Adrenal gland (tissue), 19 donors: ENCODE measurements at regions of chr11 and their contacts with region 1.

Region 1: DNA sequence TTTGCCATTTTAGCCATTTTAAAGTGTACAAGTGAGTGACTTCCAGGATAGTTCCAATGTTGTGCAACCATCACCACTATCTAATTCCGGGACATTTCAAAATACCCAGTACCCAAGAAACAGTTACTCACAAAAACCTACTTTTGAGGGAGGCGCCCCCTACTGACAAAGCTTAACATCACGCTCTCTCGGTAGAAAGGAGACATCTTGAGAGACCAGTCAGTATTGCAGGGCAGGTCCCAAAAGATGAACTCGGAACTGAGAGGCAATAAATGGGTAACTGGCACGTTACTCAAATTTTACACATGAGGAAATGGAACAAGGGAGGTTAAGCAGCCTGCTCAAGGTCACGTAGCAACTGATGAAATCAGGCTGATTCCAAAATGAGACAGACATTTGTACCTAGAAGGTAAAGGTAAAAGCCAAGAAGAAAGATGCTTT is 50.0 kb upstream of the POU2AF1 start:
- DNase-seq: peak; percentile 53 to 87 (median 76)
- H3K4me3 ChIP-seq: no peak overlapping the region
- H3K27ac ChIP-seq: no peak overlapping the region
- H3K4me1 ChIP-seq: no peaks in the 10 kb centered on the region
- H3K27me3 ChIP-seq: no peaks in the 10 kb centered on the region
- CTCF ChIP-seq: peak; percentile 57 to 73 (median 66)
- POLR2A ChIP-seq: no peak

Region 2: DNA sequence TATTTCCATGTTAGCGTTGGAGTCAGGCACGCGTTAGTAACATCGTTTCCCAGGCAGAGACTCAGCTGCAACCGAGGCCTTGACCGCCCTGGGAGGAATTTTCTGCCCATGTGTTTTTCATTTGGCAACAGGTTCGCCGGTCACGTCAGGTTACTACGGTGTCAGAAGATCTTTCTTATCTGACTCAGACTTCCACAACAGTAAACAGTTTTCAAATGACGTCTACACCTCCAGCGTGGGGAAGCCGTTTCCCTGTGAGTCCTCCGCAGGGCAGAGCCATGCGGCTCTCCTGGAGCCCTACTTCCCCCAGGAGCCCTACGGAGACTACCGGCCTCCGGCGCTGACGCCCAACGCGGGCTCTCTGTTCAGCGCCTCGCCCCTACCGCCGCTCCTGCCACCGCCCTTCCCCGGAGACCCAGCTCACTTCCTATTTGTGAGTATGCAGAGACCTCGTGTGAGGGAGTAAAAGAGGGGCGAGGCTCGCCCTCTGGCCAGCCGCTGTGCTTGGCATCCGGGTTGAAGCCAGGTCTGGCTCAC is 145.1 kb before region 1 on chr11:
- intact Hi-C with region 1: loop called in 1 of 2 experiments (anchors 5 kb)
- DNase-seq: no peak
- H3K4me3 ChIP-seq: no peak overlapping the region
- H3K27ac ChIP-seq: no peak overlapping the region
- H3K4me1 ChIP-seq: no peaks in the 10 kb centered on the region
- H3K27me3 ChIP-seq: no peaks in the 10 kb centered on the region
- CTCF ChIP-seq: no peak
- POLR2A ChIP-seq: no peak

Region 3: GRCh38 chr11:111299101-111300026 is 129.7 kb before region 1 on chr11:
- intact Hi-C with region 1: loop called in 1 of 2 experiments (anchors 5 kb)
- DNase-seq: peak; percentile 67 to 77 (median 74)
- H3K4me3 ChIP-seq: peak overlapping the region in 3 of 4 donors; percentile 37 to 83 (median 60)
- H3K27ac ChIP-seq: peak overlapping the region in 2 of 5 donors; percentile 47 to 71
- H3K4me1 ChIP-seq: peaks cover 6 to 9% of the 10 kb centered on the region in 2 donors
- H3K27me3 ChIP-seq: no peaks in the 10 kb centered on the region
- CTCF ChIP-seq: peak; percentile 51 to 77 (median 66)
- POLR2A ChIP-seq: peak in 1 of 2 donors; percentile 35

Region 4: DNA sequence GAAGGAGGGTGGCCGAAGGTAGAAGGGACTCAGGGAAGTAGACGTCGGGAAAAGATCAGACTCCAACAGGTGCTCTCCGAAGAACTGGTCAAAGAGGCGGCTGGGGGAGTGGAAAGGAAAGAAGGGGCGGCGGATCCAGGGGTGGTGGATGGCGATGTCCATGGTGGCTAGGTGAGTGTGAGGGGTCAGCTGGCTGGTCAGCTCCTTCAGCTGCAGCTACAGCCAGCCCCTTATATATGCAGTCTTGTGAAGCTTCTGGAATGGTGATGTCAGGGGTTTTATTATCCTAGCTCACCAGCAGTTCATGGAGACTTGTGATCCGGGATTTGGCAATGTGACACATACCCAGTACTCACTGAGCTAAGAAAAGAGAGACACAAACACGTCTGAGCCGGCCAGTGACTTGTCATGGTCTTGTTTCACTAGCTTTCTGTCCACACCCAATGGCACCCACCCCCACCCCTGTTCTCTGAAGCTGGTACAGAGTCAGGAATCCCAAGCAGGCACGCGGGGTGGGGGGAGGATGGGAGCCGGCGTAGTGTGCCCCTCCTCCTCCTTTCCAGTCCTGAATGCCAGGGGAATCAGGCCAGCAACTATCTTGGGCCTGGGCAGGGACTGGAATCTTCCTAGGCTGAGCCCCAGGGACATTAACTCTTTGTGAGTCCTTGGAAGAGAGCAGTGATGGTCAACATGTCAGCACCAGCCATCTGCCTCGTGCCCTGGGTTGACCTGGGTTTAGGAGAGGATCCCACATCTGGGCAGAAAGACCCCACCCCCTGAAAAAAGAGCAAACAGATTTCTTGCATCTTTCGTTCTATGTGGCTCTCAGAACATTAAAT is 482.7 kb after region 1 on chr11 and contains the start of gene CRYAB:
- intact Hi-C with region 1: no loop called
- DNase-seq: peak; percentile 82 to 94 (median 92)
- H3K4me3 ChIP-seq: peak within 1 kb of the TSS in 2 of 4 donors; percentile 13 to 53
- H3K27ac ChIP-seq: peak within 1 kb of the TSS; percentile 51 to 87 (median 61)
- H3K4me1 ChIP-seq: peaks cover 17 to 30% of the 10 kb centered on the region in 2 donors
- H3K27me3 ChIP-seq: no peaks in the 10 kb centered on the region
- CTCF ChIP-seq: no peak
- POLR2A ChIP-seq: peak; percentile 13 to 71
- total RNA-seq, gene CRYAB: 6.8 to 87.7 (median 52.3) TPM